ENCODE measurements at regions of chr17 and their contacts with region 1.

Region 1: GRCh38 chr17:35312790-35313711 is 60.4 kb downstream of the SLFN11 start:
- DNase-seq: no peak

Region 2: DNA sequence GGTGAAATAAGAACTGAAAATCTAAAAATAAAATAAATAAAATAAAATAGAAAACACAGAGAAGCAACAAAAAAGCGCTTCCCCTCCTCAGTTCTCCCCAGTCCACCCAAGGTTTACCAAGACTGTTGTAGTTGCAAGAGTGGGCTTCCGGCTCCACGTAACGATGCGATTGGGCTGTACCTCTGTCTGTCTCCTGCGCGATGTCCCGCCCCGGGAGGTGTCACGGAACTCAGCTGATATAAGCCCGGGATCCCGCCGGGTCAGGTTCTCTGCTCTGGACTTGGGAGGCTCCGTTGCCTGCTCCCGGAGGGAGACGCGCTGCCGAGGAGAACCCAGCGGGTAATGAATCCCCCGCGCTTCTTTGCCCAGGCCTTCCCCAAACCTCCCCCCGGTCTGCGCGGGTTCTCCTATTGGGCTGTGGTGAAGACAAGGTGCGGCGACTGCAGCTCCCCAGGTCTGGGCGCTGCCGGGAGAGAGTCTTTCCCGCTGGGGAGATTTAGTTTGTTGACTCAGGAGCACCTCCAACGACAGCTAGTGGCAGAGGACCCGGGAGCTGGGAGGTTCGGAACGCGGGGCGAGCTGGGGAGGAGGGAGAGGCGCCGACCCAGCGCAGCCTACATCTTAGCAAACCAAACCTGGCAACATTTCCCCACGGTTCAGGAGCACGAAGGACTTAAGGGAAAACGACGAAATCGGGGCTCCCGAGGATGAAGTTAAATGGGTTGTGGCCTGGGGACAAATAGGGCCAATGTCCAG is 70.1 kb before region 1 on chr17 and contains the start of gene SLFN5:
- intact Hi-C with region 1: loop called (anchors 5 kb)
- DNase-seq: peak; percentile 97
- total RNA-seq, gene SLFN5: 13.8 TPM

Region 3: GRCh38 chr17:35345926-35346771 is 33.1 kb after region 1 on chr17:
- intact Hi-C with region 1: loop called (anchors 2 kb)
- DNase-seq: peak; percentile 93

Region 4: GRCh38 chr17:35387496-35387895 is 74.4 kb after region 1 on chr17:
- intact Hi-C with region 1: no loop called
- DNase-seq: no peak

Region 5: GRCh38 chr17:35432176-35433074 is 119.4 kb after region 1 on chr17 and contains the start of gene SLFN12:
- intact Hi-C with region 1: loop called (anchors 5 kb)
- DNase-seq: no peak
- total RNA-seq, gene SLFN12: 4.3 TPM